Caco-2 (cell line): ENCODE measurements at regions of chr2 and their contacts with region 1.

Region 1: DNA sequence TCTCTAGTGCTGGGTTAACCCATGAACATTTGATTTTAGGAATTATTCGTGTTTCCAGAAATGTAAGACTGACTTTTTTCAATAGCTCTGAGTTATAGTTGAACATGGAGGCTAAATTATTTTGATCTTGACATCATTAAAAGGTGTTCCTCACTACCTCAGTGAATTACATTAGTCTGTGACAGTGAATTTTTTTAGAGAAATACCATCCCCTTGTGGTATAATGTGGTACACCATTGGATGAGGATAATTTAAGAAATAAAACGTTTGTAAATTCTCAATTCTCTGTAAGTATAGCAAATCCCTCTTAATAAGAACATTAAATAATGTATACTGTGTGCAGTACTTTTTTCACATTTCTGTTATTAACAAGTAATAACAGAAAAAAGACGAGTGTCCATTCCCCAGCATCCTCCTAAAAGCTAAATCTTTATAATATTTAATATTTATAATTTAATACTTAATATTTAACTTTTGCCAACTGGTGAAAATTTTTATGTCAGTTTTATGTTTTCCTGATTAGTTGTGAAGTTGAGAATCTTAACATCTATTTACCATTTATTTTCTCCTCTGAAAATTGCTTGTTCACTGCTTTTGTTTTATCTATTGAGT is 70.3 kb upstream of the CWC22 start:
- DNase-seq: no peak
- H3K4me3 ChIP-seq: no peak overlapping the region
- H3K4me3 Mint-ChIP-seq: no peak overlapping the region
- H3K27ac Mint-ChIP-seq: no peak overlapping the region
- H3K4me1 ChIP-seq: no peaks in the 10 kb centered on the region
- H3K4me1 Mint-ChIP-seq: no peaks in the 10 kb centered on the region
- H3K27me3 ChIP-seq: no peaks in the 10 kb centered on the region
- H3K27me3 Mint-ChIP-seq: peaks cover 3% of the 10 kb centered on the region
- CTCF ChIP-seq: peak; percentile 65 to 72

Region 2: GRCh38 chr2:179741317-179741716 is 336.1 kb before region 1 on chr2:
- CTCF ChIA-PET with region 1: no interaction called
- POLR2A ChIA-PET with region 1: no interaction called
- intact Hi-C with region 1: no loop called
- DNase-seq: no peak
- H3K4me3 ChIP-seq: no peak overlapping the region
- H3K4me3 Mint-ChIP-seq: no peak overlapping the region
- H3K27ac Mint-ChIP-seq: no peak overlapping the region
- H3K4me1 ChIP-seq: no peaks in the 10 kb centered on the region
- H3K4me1 Mint-ChIP-seq: no peaks in the 10 kb centered on the region
- H3K27me3 ChIP-seq: no peaks in the 10 kb centered on the region
- H3K27me3 Mint-ChIP-seq: peaks cover 5% of the 10 kb centered on the region
- CTCF ChIP-seq: no peak

Region 3: DNA sequence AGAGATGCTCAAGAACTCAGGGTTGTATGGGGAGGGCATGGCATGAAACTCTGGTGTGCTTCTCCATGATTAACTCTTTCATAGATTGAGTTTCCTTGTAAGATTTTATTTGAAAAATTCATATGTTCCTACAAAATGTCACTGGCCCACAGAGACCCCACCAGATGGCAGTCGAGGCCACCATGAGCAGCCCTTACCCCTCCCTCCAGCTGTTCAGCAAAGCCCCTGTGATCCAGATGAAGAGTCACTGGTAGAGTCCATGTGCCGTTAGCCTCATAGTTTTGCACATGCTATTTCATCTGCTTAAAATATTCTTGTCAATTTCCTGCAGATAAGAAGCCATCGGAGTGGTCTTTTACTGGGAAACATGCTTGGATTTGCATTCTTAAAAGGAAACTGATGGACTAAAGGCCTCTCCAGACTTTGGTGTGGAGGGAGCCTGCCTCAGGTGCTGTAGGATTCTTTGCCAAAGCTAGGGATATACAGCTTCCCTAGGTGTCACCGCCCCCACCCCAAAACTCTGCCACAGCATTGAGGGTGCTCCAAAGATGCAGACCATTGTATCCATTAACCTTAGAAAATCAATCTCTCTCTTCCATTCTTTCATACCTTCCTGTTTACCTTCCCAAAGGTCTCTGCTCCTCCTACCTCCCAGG is 234.8 kb before region 1 on chr2:
- CTCF ChIA-PET with region 1: no interaction called
- POLR2A ChIA-PET with region 1: no interaction called
- intact Hi-C with region 1: loop called (anchors 1 kb)
- DNase-seq: peak; percentile 52 to 60
- H3K4me3 ChIP-seq: no peak overlapping the region
- H3K4me3 Mint-ChIP-seq: no peak overlapping the region
- H3K27ac Mint-ChIP-seq: no peak overlapping the region
- H3K4me1 ChIP-seq: no peaks in the 10 kb centered on the region
- H3K4me1 Mint-ChIP-seq: no peaks in the 10 kb centered on the region
- H3K27me3 ChIP-seq: no peaks in the 10 kb centered on the region
- H3K27me3 Mint-ChIP-seq: peaks cover 9% of the 10 kb centered on the region
- CTCF ChIP-seq: peak; percentile 69 to 76

Region 4: DNA sequence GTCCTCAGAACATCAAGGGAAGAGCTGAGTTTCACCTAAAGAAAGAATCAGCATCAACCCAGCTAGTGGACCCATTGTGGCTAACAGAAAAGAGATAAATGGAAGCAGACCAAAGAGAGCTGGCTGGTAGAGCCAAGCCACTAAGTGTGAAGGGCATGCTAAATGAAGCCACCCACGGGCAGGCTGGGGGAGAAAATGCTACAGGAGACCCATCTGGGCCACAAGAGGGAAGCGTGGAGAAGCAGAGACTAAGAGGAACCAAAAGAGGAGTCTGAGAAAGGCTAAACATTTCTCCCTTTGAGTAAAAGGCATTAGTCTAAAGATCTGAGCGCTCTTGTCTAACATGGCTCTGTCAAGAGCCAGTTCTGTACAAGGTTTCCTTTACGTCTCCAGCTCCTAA is 86.1 kb before region 1 on chr2:
- CTCF ChIA-PET with region 1: no interaction called
- POLR2A ChIA-PET with region 1: no interaction called
- intact Hi-C with region 1: loop called (anchors 1 kb)
- DNase-seq: peak; percentile 24 to 39
- H3K4me3 ChIP-seq: no peak overlapping the region
- H3K4me3 Mint-ChIP-seq: no peak overlapping the region
- H3K27ac Mint-ChIP-seq: no peak overlapping the region
- H3K4me1 ChIP-seq: no peaks in the 10 kb centered on the region
- H3K4me1 Mint-ChIP-seq: no peaks in the 10 kb centered on the region
- H3K27me3 ChIP-seq: no peaks in the 10 kb centered on the region
- H3K27me3 Mint-ChIP-seq: no peaks in the 10 kb centered on the region
- CTCF ChIP-seq: no peak

Region 5: DNA sequence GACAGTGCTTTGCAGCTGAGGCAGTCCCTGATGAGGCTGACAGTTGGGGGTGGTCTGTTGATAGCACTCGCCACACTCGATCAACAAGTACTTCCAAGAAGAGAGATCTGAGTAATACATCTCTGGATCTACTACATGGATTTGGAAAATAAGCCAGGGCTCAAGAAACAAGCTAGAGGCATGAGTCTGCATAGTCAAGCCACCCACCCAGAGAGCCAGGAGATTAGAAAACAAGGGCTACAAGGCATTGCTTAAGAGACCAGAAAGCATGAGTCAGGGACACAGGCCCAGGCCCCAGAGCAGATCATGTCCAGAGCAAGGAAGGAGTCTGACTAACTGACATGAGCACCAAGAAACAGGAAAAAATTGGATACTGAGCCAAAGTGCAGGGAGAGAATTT is 126.6 kb after region 1 on chr2:
- CTCF ChIA-PET with region 1: no interaction called
- POLR2A ChIA-PET with region 1: no interaction called
- intact Hi-C with region 1: no loop called
- DNase-seq: no peak
- H3K4me3 ChIP-seq: no peak overlapping the region
- H3K4me3 Mint-ChIP-seq: no peak overlapping the region
- H3K27ac Mint-ChIP-seq: no peak overlapping the region
- H3K4me1 ChIP-seq: no peaks in the 10 kb centered on the region
- H3K4me1 Mint-ChIP-seq: no peaks in the 10 kb centered on the region
- H3K27me3 ChIP-seq: no peaks in the 10 kb centered on the region
- H3K27me3 Mint-ChIP-seq: no peaks in the 10 kb centered on the region
- CTCF ChIP-seq: no peak